ENCODE measurements at regions of chr7 and their contacts with region 1.

Region 1: DNA sequence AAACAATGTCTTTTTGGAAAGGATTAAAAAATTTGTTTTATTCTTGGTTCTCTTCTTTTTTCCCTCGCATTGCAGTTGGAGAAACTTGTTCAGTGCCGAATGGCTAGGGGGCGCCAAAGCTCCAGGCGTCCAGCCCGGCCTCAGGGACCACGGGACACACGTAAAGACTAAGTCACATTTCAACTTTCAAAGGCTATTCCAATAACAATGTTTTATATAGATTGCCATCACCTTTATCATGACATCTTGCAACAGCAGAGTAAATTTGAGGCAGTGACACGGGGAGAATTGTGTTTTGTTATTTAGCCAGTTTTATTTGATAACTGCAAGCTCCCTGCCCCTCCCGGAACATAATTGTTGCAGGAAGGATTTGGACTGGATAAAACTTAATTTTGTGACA is 2.2 kb upstream of the IGFBP3 start:
- DNase-seq: peak; percentile 83
- ATAC-seq: no peak
- H3K4me3 Mint-ChIP-seq: peak overlapping the region; percentile 74
- H3K27ac Mint-ChIP-seq: no peak overlapping the region
- H3K4me1 Mint-ChIP-seq: peaks cover 44% of the 10 kb centered on the region
- H3K27me3 Mint-ChIP-seq: peaks cover 57% of the 10 kb centered on the region
- CTCF ChIP-seq: peak; percentile 89

Region 2: GRCh38 chr7:45872116-45873034 is 50.9 kb before region 1 on chr7:
- CTCF ChIA-PET with region 1: interaction called, 10 read pairs
- POLR2A ChIA-PET with region 1: interaction called, 3 read pairs
- DNase-seq: peak; percentile 61
- ATAC-seq: peak; percentile 96
- H3K4me3 Mint-ChIP-seq: no peak overlapping the region
- H3K27ac Mint-ChIP-seq: no peak overlapping the region
- H3K4me1 Mint-ChIP-seq: 0 out of 2 replicates have a peak, but pooled peaks cover 5% of the 10 kb centered on the region
- H3K27me3 Mint-ChIP-seq: no peaks in the 10 kb centered on the region; the same call in none of the 2 replicates
- CTCF ChIP-seq: peak; percentile 57

Region 3: DNA sequence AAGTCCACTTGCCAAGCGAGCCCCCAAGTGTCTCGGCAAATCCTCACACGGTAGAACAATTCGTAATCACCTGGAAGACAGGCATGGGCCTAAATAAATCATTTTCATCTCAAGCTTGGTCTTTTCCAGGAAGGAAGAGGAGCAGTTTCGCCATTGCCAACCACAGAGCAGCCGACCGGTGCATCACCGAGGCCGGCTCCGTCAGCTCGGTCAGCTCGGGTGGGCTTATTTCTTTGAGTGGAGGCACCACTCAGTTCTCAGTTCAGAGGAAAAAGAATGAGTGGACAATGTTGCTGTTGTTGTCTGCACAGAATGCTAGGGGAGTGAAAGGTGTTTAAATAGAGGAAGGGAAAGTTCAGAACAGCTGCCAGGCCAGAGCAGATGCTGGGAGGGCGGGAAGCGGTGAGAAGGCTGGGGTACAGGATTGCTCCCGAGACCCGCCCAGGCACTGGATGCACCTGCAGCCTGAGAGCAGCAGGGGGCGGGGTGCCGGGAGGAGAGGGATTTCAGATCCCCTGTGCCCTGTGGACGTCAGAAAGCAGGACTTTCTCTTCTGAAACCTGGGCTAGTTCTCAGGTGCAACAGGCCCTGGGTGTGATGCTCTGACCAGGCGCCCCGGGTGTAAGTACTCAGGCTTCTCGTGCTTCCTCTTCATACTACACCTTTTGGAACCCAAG is 15.5 kb after region 1 on chr7:
- CTCF ChIA-PET with region 1: interaction called, 16 read pairs
- POLR2A ChIA-PET with region 1: no interaction called
- DNase-seq: peak; percentile 74
- ATAC-seq: peak; percentile 96
- H3K4me3 Mint-ChIP-seq: no peak overlapping the region
- H3K27ac Mint-ChIP-seq: no peak overlapping the region
- H3K4me1 Mint-ChIP-seq: 0 out of 2 replicates have a peak, but pooled peaks cover 2% of the 10 kb centered on the region
- H3K27me3 Mint-ChIP-seq: no peaks in the 10 kb centered on the region
- CTCF ChIP-seq: peak; percentile 69

Region 4: DNA sequence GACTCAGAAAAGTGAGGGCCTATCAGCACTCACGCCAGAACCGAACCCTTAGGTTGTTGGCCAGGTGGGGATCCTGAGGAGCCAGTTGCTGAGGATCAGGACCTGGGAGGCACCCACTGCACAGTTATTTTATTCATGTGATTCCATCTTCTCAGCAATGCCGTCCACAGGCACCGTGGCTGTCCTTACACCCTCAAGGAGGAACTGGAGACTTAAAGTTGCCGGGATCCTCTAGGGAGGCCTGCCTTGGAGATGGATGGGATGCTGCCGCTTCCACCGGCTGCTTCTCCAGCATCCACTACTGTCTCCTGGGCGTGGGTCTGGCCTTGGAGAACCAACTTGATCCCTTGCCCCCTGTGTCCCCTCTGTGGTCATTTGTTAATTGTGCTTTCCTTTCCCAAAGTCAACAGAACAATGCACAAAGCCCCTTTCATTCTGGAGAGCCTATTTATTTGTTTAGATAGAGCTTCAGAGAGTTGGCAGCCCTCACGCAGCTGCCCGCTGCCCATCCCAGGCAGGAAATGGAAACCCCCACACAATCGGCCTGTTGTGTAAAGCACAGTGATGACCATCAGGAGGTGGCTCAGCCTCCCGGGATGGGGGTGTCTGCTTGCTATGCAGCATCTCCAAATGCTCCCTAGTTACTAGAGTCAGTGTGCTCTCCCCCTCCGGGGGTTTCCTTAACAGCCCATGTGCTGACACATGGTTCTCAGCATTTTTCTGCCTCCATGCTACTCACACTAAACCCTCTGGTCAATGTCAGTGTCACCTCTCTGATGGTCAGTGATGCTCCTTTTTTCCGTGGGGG is 50.6 kb after region 1 on chr7:
- CTCF ChIA-PET with region 1: no interaction called
- POLR2A ChIA-PET with region 1: no interaction called
- DNase-seq: no peak
- ATAC-seq: no peak
- H3K4me3 Mint-ChIP-seq: no peak overlapping the region
- H3K27ac Mint-ChIP-seq: no peak overlapping the region
- H3K4me1 Mint-ChIP-seq: peaks cover 18% of the 10 kb centered on the region
- H3K27me3 Mint-ChIP-seq: no peaks in the 10 kb centered on the region
- CTCF ChIP-seq: no peak

Region 5: GRCh38 chr7:46131916-46132795 is 208.9 kb after region 1 on chr7:
- CTCF ChIA-PET with region 1: interaction called, 32 read pairs
- POLR2A ChIA-PET with region 1: no interaction called
- DNase-seq: peak; percentile 31
- ATAC-seq: peak; percentile 96
- H3K4me3 Mint-ChIP-seq: no peak overlapping the region
- H3K27ac Mint-ChIP-seq: no peak overlapping the region
- H3K4me1 Mint-ChIP-seq: peaks cover 7% of the 10 kb centered on the region
- H3K27me3 Mint-ChIP-seq: no peaks in the 10 kb centered on the region
- CTCF ChIP-seq: no peak

Measured in WTC11 (cell line).